CD4-positive, alpha-beta T cell (primary cell): ENCODE measurements at regions of chr15 and their contacts with region 1.

Region 1: GRCh38 chr15:72671535-72671934 is 14.4 kb downstream of the HIGD2B start:
- DNase-seq: no peak
- ATAC-seq: no peak
- H3K4me3 ChIP-seq: no peak overlapping the region
- H3K4me3 Mint-ChIP-seq: no peak overlapping the region
- H3K27ac ChIP-seq: no peak overlapping the region
- H3K27ac Mint-ChIP-seq: no peak overlapping the region
- H3K4me1 ChIP-seq: peaks cover 7% of the 10 kb centered on the region
- H3K4me1 Mint-ChIP-seq: peaks cover 6% of the 10 kb centered on the region
- H3K27me3 ChIP-seq: peaks cover 0 to 10% of the 10 kb centered on the region in 2 experiments
- H3K27me3 Mint-ChIP-seq: peaks cover 15% of the 10 kb centered on the region
- CTCF ChIP-seq: no peak

Region 2: GRCh38 chr15:72599855-72600464 is 71.6 kb before region 1 on chr15:
- CTCF ChIA-PET with region 1: interaction called, 5 read pairs
- POLR2A ChIA-PET with region 1: no interaction called
- intact Hi-C with region 1: loop called in 1 of 2 experiments (anchors 10 kb)
- DNase-seq: peak in 4 of 14 experiments; percentile 35 to 58 (median 48)
- ATAC-seq: no peak
- H3K4me3 ChIP-seq: no peak overlapping the region
- H3K4me3 Mint-ChIP-seq: no peak overlapping the region
- H3K27ac ChIP-seq: no peak overlapping the region
- H3K27ac Mint-ChIP-seq: no peak overlapping the region
- H3K4me1 ChIP-seq: no peaks in the 10 kb centered on the region
- H3K4me1 Mint-ChIP-seq: no peaks in the 10 kb centered on the region
- H3K27me3 ChIP-seq: no peaks in the 10 kb centered on the region
- H3K27me3 Mint-ChIP-seq: no peaks in the 10 kb centered on the region
- CTCF ChIP-seq: peak; percentile 79

Region 3: GRCh38 chr15:72783563-72784237 is 112.2 kb after region 1 on chr15 and contains the start of gene ADPGK:
- CTCF ChIA-PET with region 1: no interaction called
- POLR2A ChIA-PET with region 1: no interaction called
- intact Hi-C with region 1: no loop called
- DNase-seq: peak; percentile 88 to 98 (median 94)
- ATAC-seq: peak; percentile 74
- H3K4me3 ChIP-seq: peak within 1 kb of the TSS; percentile 94
- H3K4me3 Mint-ChIP-seq: peak within 1 kb of the TSS; percentile 96
- H3K27ac ChIP-seq: peak within 1 kb of the TSS; percentile 91 to 93
- H3K27ac Mint-ChIP-seq: peak within 1 kb of the TSS; percentile 98
- H3K4me1 ChIP-seq: peaks cover 50% of the 10 kb centered on the region
- H3K4me1 Mint-ChIP-seq: peaks cover 50% of the 10 kb centered on the region
- H3K27me3 ChIP-seq: no peaks in the 10 kb centered on the region
- H3K27me3 Mint-ChIP-seq: no peaks in the 10 kb centered on the region
- CTCF ChIP-seq: no peak
- total RNA-seq, gene ADPGK: 88.8 to 92.5 TPM